Endothelial cell of umbilical vein (primary cell): ENCODE measurements at regions of chr1 and their contacts with region 1.

Region 1: GRCh38 chr1:28412731-28413130 is 43.2 kb downstream of the PHACTR4 start:
- DNase-seq: no peak
- H3K4me3 ChIP-seq: no peak overlapping the region
- H3K27ac ChIP-seq: no peak overlapping the region
- H3K4me1 ChIP-seq: peaks cover 18% of the 10 kb centered on the region
- H3K27me3 ChIP-seq: no peaks in the 10 kb centered on the region
- CTCF ChIP-seq: no peak
- POLR2A ChIP-seq: no peak

Region 2: GRCh38 chr1:28470146-28470545 is 57.4 kb after region 1 on chr1:
- CTCF ChIA-PET with region 1: interaction called, 60 read pairs
- POLR2A ChIA-PET with region 1: no interaction called
- dilution Hi-C with region 1: no loop called
- intact Hi-C with region 1: no loop called
- DNase-seq: no peak
- H3K4me3 ChIP-seq: no peak overlapping the region
- H3K27ac ChIP-seq: no peak overlapping the region
- H3K4me1 ChIP-seq: no peaks in the 10 kb centered on the region
- H3K27me3 ChIP-seq: no peaks in the 10 kb centered on the region
- CTCF ChIP-seq: no peak
- POLR2A ChIP-seq: no peak

Region 3: GRCh38 chr1:28505406-28506187 is 92.9 kb after region 1 on chr1 and contains the start of gene RCC1:
- CTCF ChIA-PET with region 1: interaction called, 3 read pairs
- POLR2A ChIA-PET with region 1: interaction called, 5 read pairs
- dilution Hi-C with region 1: no loop called
- intact Hi-C with region 1: loop called (anchors 2 kb)
- DNase-seq: peak; percentile 100
- H3K4me3 ChIP-seq: peak within 1 kb of the TSS; percentile 58 to 100 (median 87)
- H3K27ac ChIP-seq: peak within 1 kb of the TSS; percentile 78
- H3K4me1 ChIP-seq: peaks cover 29% of the 10 kb centered on the region
- H3K27me3 ChIP-seq: no peaks in the 10 kb centered on the region
- CTCF ChIP-seq: no peak
- POLR2A ChIP-seq: peak; percentile 100
- total RNA-seq, gene RCC1: 72.7 and 77.7 TPM in 2 replicates

Region 4: GRCh38 chr1:28552758-28553663 is 140.3 kb after region 1 on chr1 and contains the start of gene TRNAU1AP:
- CTCF ChIA-PET with region 1: no interaction called
- POLR2A ChIA-PET with region 1: no interaction called
- dilution Hi-C with region 1: no loop called
- intact Hi-C with region 1: loop called (anchors 1 kb)
- DNase-seq: peak; percentile 98
- H3K4me3 ChIP-seq: peak within 1 kb of the TSS; percentile 79 to 86 (median 85)
- H3K27ac ChIP-seq: peak within 1 kb of the TSS; percentile 39
- H3K4me1 ChIP-seq: peaks cover 12% of the 10 kb centered on the region
- H3K27me3 ChIP-seq: no peaks in the 10 kb centered on the region
- CTCF ChIP-seq: no peak
- POLR2A ChIP-seq: peak; percentile 86
- total RNA-seq, gene TRNAU1AP: 46.2 and 49.0 TPM in 2 replicates